ENCODE measurements at regions of chr19 and their contacts with region 1.

Region 1: GRCh38 chr19:35352448-35353304 is 5.0 kb downstream of the FFAR1 start:
- DNase-seq: peak; percentile 81
- H3K4me3 ChIP-seq: no peak overlapping the region
- H3K27ac ChIP-seq: no peak overlapping the region
- H3K4me1 ChIP-seq: peaks cover 0 to under 1% (median 0%) of the 10 kb centered on the region in 4 donors
- H3K27me3 ChIP-seq: peaks cover 0 to 7% (median 0%) of the 10 kb centered on the region in 3 donors
- CTCF ChIP-seq: peak; percentile 21 to 65 (median 63)
- EP300 ChIP-seq: no peak
- POLR2A ChIP-seq: no peak

Region 2: GRCh38 chr19:35468637-35469036 is 116.0 kb after region 1 on chr19:
- intact Hi-C with region 1: loop called (anchors 10 kb)
- DNase-seq: no peak
- H3K4me3 ChIP-seq: no peak overlapping the region
- H3K27ac ChIP-seq: no peak overlapping the region
- H3K4me1 ChIP-seq: no peaks in the 10 kb centered on the region
- H3K27me3 ChIP-seq: peaks cover 0 to 3% (median 0%) of the 10 kb centered on the region in 3 donors
- CTCF ChIP-seq: peak in 2 of 4 experiments; percentile 27 to 38
- EP300 ChIP-seq: no peak
- POLR2A ChIP-seq: no peak